ENCODE measurements at regions of chr6 and their contacts with region 1.

Region 1: DNA sequence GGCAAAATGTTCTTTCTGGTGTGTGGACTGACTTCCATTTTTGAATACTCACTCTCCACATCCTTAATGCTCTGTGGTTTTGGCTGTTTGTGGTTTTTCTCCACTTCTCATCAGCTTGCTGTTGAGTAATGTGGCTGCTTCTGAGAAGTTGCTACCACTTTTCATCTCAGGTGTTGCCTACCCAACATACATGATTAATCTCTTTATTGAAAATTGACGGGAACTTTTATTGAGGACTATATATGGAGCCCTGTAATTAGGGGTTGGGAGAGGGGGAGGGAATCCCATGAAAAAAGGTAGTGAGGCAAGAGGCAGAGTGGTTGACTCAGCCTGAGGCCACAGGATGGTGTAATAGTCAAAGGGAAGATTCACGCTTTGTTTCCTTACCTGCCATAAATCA is 17.6 kb downstream of the IL22RA2 start:
- DNase-seq: peak in 1 of 2 donors; percentile 74
- ATAC-seq: peak; percentile 85 to 98 (median 86)
- H3K4me3 ChIP-seq: no peak overlapping the region
- H3K4me3 Mint-ChIP-seq: peak overlapping the region; percentile 72
- H3K27ac ChIP-seq: no peak overlapping the region
- H3K27ac Mint-ChIP-seq: peak overlapping the region; percentile 45 to 89
- H3K4me1 ChIP-seq: peaks cover 19% of the 10 kb centered on the region
- H3K4me1 Mint-ChIP-seq: peaks cover 36 to 43% of the 10 kb centered on the region in 2 donors
- H3K27me3 ChIP-seq: peaks cover 3% of the 10 kb centered on the region
- H3K27me3 Mint-ChIP-seq: peaks cover 14 to 23% of the 10 kb centered on the region in 2 donors
- CTCF ChIP-seq: no peak

Region 2: DNA sequence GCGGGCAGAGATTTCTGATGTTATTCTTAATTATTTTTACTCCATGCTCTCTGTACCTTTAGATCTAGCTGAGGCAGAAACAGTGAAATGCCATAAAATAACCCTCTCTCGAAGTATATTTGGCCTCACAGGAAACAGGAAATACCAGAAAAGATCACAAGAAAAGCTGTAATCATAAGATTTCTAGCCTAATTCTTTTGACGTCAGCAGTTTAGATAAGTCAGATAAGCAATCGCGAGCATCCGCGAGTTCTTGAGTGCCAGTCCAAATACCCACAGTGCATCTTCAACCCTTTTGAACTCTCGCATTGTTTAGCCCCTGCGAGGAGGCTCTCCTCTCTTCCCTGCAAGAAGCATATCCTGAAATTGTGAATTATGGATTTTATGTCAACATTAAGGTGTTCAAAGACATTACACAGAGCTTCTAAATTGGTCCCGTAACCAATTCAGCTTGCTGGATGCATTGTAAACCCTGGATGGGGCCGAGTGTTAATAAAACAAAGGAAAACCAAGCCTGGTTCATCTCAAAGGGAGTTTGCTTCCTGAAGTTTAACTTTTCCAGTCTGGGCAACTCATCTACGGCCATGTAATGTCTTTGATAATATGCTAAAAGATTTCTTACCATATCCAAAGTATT is 1104.6 kb before region 1 on chr6:
- intact Hi-C with region 1: no loop called
- DNase-seq: peak in 1 of 2 donors; percentile 59
- ATAC-seq: peak in 2 of 3 donors; percentile 50 to 70
- H3K4me3 ChIP-seq: no peak overlapping the region
- H3K4me3 Mint-ChIP-seq: no peak overlapping the region
- H3K27ac ChIP-seq: no peak overlapping the region
- H3K27ac Mint-ChIP-seq: peak overlapping the region in 1 of 2 donors; percentile 10
- H3K4me1 ChIP-seq: no peaks in the 10 kb centered on the region
- H3K4me1 Mint-ChIP-seq: peaks cover 7 to 12% of the 10 kb centered on the region in 2 donors
- H3K27me3 ChIP-seq: no peaks in the 10 kb centered on the region
- H3K27me3 Mint-ChIP-seq: peaks cover 0 to 15% of the 10 kb centered on the region in 2 donors
- CTCF ChIP-seq: no peak

Region 3: GRCh38 chr6:137033828-137034227 is 122.0 kb before region 1 on chr6:
- intact Hi-C with region 1: loop called (anchors 5 kb)
- DNase-seq: peak; percentile 63 to 81
- ATAC-seq: peak; percentile 92 to 99 (median 92)
- H3K4me3 ChIP-seq: no peak overlapping the region
- H3K4me3 Mint-ChIP-seq: peak overlapping the region; percentile 69
- H3K27ac ChIP-seq: no peak overlapping the region
- H3K27ac Mint-ChIP-seq: peak overlapping the region; percentile 73 to 77
- H3K4me1 ChIP-seq: peaks cover 17% of the 10 kb centered on the region
- H3K4me1 Mint-ChIP-seq: peaks cover 14 to 22% of the 10 kb centered on the region in 2 donors
- H3K27me3 ChIP-seq: peaks cover 67% of the 10 kb centered on the region
- H3K27me3 Mint-ChIP-seq: peaks cover 70 to 83% of the 10 kb centered on the region in 2 donors
- CTCF ChIP-seq: no peak

Region 4: DNA sequence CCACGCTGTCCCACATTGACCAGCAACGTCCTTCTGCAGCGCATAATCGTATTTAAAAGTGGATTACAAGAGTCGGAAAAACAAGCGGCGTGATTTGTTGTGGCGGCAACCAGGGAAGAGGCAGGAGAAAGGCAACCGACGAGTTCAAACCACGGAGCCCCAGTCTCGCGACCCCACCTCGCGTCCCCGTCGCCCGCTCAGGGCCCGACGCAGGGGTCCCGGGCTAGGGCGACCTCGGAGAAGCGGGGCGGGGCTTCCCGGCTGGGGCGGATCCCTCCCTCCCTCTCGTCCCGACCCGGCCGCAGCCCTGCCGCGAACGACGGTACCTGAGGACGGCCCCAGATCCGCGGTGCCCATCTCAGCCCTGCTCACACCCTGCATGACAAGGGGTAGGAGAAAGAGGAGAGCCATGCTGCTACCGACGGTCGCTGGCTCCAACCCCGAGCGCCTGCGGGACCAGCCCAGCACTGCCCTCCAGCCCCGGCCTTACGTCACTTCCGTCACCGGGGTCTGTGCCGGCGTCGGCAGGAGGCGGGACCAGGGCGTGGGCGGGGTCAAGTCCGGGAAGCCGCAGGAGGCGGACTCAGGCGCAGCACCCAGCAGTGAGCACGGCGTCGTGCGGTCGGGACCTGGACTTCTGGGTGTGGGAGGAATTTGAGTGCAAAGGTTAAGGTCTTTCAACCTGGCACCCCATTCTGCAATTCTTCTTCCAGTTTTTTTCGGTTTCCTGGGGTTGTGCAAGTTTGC is 63.3 kb after region 1 on chr6 and contains the start of gene IFNGR1:
- intact Hi-C with region 1: loop called (anchors 5 kb)
- DNase-seq: peak; percentile 96 to 97
- ATAC-seq: peak; percentile 82 to 93 (median 91)
- H3K4me3 ChIP-seq: peak within 1 kb of the TSS; percentile 78
- H3K4me3 Mint-ChIP-seq: peak within 1 kb of the TSS; percentile 100
- H3K27ac ChIP-seq: peak within 1 kb of the TSS; percentile 93
- H3K27ac Mint-ChIP-seq: peak within 1 kb of the TSS; percentile 99
- H3K4me1 ChIP-seq: peaks cover 45% of the 10 kb centered on the region
- H3K4me1 Mint-ChIP-seq: peaks cover 64 to 65% of the 10 kb centered on the region in 2 donors
- H3K27me3 ChIP-seq: no peaks in the 10 kb centered on the region
- H3K27me3 Mint-ChIP-seq: no peaks in the 10 kb centered on the region
- CTCF ChIP-seq: no peak
- total RNA-seq, gene IFNGR1: 77.5 to 128 (median 100) TPM

Region 5: DNA sequence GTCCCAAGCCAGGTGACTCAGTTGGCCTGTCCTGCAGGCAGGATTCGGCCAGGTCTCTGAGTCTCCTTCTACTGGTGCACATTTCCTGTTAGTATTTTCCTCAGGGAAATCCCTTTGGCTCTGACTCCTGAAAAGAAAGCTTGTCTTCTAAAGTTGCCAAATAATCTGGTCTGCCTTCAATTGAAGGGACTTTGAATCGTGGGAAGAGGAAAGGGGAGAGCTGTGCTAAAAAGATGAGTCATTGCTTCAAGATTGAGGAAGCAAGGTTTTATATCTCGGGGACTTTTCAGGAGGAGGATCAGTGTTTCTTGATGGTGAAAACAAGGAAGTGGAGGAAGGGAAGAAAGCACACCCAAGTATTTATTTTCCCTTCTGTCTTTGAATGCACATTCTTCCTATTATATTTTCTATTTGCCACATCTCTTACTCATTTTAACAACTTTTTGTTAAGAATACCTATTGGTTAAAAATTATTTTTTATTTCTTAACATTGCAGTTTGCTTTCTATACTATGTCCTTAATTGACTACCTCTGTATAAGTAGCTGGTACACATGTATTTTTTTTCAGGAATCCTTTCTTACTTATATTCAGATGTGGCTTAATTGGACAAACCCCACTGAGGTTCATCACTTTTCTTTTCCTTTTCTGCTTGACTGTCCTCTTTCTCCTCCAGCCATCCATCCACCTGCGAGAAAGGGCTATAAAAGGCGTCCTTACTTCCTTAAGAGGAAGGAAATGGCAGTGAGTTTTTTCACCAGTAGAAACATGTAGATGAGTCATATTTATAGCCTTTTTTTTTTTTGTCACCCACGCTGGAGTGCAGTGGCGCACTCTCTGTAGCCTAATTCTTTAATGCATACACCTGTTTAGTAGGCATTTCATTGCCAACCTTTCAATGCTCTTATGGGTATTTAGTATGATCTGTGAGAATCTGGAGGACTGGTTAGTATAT is 78.4 kb after region 1 on chr6:
- intact Hi-C with region 1: loop called (anchors 5 kb)
- DNase-seq: peak in 1 of 2 donors; percentile 72
- ATAC-seq: peak; percentile 67 to 77 (median 75)
- H3K4me3 ChIP-seq: no peak overlapping the region
- H3K4me3 Mint-ChIP-seq: peak overlapping the region; percentile 77
- H3K27ac ChIP-seq: peak overlapping the region; percentile 50
- H3K27ac Mint-ChIP-seq: peak overlapping the region; percentile 79 to 88
- H3K4me1 ChIP-seq: peaks cover 51% of the 10 kb centered on the region
- H3K4me1 Mint-ChIP-seq: peaks cover 64 to 72% of the 10 kb centered on the region in 2 donors
- H3K27me3 ChIP-seq: no peaks in the 10 kb centered on the region
- H3K27me3 Mint-ChIP-seq: no peaks in the 10 kb centered on the region
- CTCF ChIP-seq: no peak

Measured in natural killer cell (primary cell).